Dendritic cell treated with granulocyte-macrophage colony-stimulating factor and Interleukin-4, amounts not matched to agents 40 ng/mL and 50 ng/mL, for 4 days (primary cell): ENCODE measurements at regions of chr9 and their contacts with region 1.

Region 1: GRCh38 chr9:25254051-25254450 is 424.2 kb downstream of the TUSC1 start:
- H3K4me3 Mint-ChIP-seq: no peak overlapping the region
- H3K27ac Mint-ChIP-seq: no peak overlapping the region
- H3K4me1 Mint-ChIP-seq: no peaks in the 10 kb centered on the region
- H3K27me3 Mint-ChIP-seq: no peaks in the 10 kb centered on the region

Region 2: GRCh38 chr9:25284365-25284764 is 30.3 kb after region 1 on chr9:
- intact Hi-C with region 1: loop called (anchors 5 kb)
- H3K4me3 Mint-ChIP-seq: no peak overlapping the region
- H3K27ac Mint-ChIP-seq: no peak overlapping the region
- H3K4me1 Mint-ChIP-seq: no peaks in the 10 kb centered on the region
- H3K27me3 Mint-ChIP-seq: no peaks in the 10 kb centered on the region

Region 3: DNA sequence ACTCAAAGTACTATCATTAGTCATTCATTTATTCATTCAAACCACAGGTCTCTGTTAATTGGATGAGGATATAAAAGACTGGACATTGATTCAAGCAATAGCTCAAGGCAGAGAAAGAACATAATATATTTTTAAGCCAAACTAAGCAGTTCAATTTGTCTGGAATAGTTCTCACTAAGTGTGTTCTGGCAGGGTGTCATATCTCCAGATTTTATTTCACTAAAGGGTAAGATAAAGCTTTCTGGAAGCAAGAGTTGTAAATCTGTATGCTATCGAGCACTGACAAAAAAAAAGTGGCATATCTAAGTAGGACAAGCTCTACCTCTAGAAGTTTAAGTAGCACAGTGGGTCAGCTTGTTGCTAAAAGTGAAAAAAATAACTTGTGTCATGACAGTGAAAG is 48.5 kb after region 1 on chr9:
- intact Hi-C with region 1: no loop called
- H3K4me3 Mint-ChIP-seq: no peak overlapping the region
- H3K27ac Mint-ChIP-seq: no peak overlapping the region
- H3K4me1 Mint-ChIP-seq: no peaks in the 10 kb centered on the region
- H3K27me3 Mint-ChIP-seq: no peaks in the 10 kb centered on the region